GM10248 (cell line): ENCODE measurements at regions of chr5 and their contacts with region 1.

Region 1: GRCh38 chr5:137320056-137321045 is 178.8 kb downstream of the SPOCK1 start:
- DNase-seq: peak; percentile 68
- CTCF ChIP-seq: peak; percentile 70

Region 2: GRCh38 chr5:137122075-137122474 is 198.3 kb before region 1 on chr5:
- CTCF ChIA-PET with region 1: no interaction called
- POLR2A ChIA-PET with region 1: no interaction called
- DNase-seq: no peak
- CTCF ChIP-seq: no peak

Region 3: GRCh38 chr5:137155261-137156000 is 164.9 kb before region 1 on chr5:
- CTCF ChIA-PET with region 1: no interaction called
- POLR2A ChIA-PET with region 1: no interaction called
- DNase-seq: no peak
- CTCF ChIP-seq: no peak

Region 4: DNA sequence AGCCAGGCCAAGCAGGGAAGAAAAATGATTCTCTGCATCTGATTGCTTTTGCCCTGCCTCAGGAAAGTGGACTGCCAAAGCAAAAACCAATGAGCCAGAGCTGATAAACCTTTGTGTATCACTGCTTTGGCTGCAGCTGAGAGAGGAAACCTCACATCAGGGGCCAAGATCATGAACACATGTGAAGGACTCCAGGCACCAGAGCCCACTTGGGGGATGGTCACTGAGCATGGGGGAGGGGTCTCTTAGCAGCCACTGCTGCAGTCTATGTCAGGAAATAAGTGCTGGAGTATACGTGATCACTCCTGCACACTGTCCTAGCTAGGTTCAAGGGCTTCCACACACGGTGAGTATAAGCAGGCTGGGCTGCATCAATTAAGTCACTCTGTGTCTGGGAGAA is 51.1 kb before region 1 on chr5:
- CTCF ChIA-PET with region 1: interaction called, 10 read pairs
- POLR2A ChIA-PET with region 1: no interaction called
- DNase-seq: no peak
- CTCF ChIP-seq: no peak

Region 5: GRCh38 chr5:137304226-137304874 is 16.0 kb before region 1 on chr5:
- CTCF ChIA-PET with region 1: interaction called, 10 read pairs
- POLR2A ChIA-PET with region 1: no interaction called
- DNase-seq: no peak
- CTCF ChIP-seq: no peak

Region 6: GRCh38 chr5:137336565-137337120 is 16.3 kb after region 1 on chr5:
- CTCF ChIA-PET with region 1: interaction called, 50 read pairs
- POLR2A ChIA-PET with region 1: interaction called, 3 read pairs
- DNase-seq: no peak
- CTCF ChIP-seq: no peak

Region 7: DNA sequence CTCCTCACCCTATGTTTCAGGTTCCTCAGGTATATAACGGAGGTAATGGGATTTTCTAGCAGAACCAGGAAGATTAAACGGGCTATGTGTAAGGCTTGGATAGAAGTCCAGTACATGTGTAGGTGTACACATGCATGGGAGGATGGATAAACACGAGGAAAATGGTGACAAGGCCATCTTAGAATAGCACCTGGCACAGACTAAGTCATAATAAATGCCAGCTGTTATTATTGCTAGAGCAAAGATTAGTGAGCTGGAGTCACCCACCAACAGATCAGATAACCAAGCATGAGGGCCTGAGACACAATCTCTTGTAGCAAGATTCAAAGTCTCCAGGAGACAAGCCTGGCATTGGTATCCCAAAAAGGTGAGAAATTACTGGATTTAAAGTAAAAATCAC is 157.7 kb after region 1 on chr5:
- CTCF ChIA-PET with region 1: interaction called, 10 read pairs
- POLR2A ChIA-PET with region 1: no interaction called
- DNase-seq: no peak
- CTCF ChIP-seq: no peak

Region 8: DNA sequence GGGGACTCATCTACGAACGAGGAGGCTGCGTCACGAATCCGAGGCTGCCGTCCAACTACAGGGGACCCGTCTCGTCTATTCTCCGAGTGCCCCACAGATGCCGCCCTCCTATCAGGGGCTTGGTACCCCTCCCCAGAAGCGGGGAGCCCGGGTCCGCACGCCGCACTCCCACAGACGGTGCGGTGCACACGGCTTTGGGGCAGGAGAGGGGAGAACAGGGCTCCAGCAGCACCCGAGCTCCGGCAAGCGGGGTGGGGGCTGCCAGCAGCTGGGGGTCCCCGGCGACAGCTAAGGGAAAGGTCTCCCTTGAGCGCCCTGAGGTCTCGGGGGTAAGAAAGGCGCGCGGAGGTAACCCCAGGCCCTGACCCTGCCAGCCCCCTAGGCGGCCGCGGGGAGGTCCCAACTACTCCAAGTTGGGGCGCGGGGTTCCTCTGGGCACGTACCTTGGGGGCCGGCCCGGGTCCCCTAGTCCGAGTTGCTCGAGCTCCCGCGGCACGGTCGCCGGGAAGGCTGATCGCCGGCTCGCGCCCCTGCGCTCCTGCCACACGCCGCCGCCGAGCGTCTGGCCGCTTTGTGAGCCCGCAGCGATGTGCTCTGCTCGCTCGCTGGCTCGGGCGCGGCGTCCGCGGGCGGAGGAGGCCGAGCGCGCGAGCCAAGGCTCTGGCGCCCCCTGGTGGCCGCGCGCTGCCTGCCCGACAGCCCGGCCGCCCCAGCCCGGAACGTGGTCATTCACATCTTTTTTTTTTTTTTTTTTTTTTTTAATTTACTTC is 178.6 kb after region 1 on chr5 and contains the start of gene SPOCK1:
- CTCF ChIA-PET with region 1: interaction called, 111 read pairs
- POLR2A ChIA-PET with region 1: no interaction called
- DNase-seq: peak; percentile 91
- CTCF ChIP-seq: peak; percentile 89